Activated CD8-positive, alpha-beta T cell treated with anti-CD3 and anti-CD28 coated beads for 36 hours (primary cell): ENCODE measurements at regions of chr3 and their contacts with region 1.

Region 1: GRCh38 chr3:152193673-152194267 is 75.0 kb upstream of the MBNL1 start:
- DNase-seq: peak; percentile 60
- ATAC-seq: peak; percentile 60
- H3K4me3 Mint-ChIP-seq: peak overlapping the region; percentile 76
- H3K27ac Mint-ChIP-seq: peak overlapping the region; percentile 94
- H3K4me1 Mint-ChIP-seq: peaks cover 74% of the 10 kb centered on the region
- H3K27me3 Mint-ChIP-seq: no peaks in the 10 kb centered on the region
- CTCF ChIP-seq: no peak

Region 2: DNA sequence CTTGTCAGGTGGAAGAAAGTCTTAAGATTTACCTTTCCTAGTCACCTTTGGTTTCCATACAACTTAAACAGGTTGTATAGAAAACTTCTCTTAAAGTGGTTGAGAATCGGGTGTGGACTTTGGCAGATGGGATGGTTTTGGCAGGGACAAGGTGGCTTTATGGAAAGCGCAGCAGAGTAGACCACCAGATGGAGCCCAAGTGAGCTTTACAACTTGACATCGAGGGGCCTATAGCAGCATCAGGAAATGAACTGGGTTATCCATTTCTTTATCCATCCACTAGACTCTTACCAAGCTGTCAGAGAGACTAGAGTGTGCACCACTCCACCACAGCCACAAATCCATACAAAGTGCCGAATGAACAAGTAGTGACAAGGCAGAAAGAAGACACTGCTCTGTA is 10.3 kb before region 1 on chr3:
- CTCF ChIA-PET with region 1: interaction called, 12 read pairs
- POLR2A ChIA-PET with region 1: no interaction called
- intact Hi-C with region 1: no loop called
- DNase-seq: peak; percentile 82
- ATAC-seq: peak; percentile 91
- H3K4me3 Mint-ChIP-seq: peak overlapping the region; percentile 32
- H3K27ac Mint-ChIP-seq: peak overlapping the region; percentile 72
- H3K4me1 Mint-ChIP-seq: peaks cover 57% of the 10 kb centered on the region
- H3K27me3 Mint-ChIP-seq: no peaks in the 10 kb centered on the region
- CTCF ChIP-seq: peak; percentile 71

Region 3: DNA sequence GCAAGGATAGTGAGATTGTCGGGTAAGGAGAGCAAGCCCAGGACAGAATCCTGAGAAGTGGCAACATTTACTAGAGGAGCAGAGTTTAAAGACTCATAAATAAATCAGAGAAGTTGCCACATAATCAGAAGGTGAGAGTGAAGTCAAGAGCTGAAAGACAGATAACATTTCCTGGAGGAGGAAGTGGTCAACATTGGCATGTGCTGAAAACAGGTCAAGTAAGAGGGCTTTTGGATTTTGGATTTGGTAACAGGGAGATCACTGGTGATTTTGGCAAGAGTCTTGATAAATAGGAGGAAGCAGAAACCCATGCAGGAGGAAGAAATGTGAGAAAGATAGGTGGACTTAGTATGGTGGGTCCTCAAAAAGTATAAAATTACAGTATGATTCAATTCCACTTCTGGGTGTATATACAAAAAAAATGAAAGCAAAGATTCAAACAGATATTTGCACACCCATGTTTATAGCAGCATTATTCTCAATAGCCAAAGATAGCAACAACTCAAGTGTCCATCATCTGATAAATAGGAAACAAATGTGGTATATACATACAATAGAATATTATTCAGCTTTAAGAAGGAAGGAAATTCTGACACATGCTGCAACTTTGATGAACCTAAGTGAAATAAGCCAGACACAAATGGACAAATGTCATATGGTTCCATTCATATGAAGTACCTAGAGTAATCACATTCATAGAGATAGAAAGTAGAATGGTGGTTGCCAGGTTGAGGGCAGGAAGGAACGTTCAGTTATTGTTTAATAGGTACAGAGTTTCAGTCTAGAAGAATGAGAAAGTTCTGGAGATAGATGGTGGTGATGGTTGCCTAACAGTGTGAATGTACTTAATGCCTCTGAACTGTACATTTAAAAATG is 47.6 kb after region 1 on chr3:
- CTCF ChIA-PET with region 1: interaction called, 9 read pairs
- POLR2A ChIA-PET with region 1: interaction called, 89 read pairs
- intact Hi-C with region 1: loop called (anchors 2 kb)
- DNase-seq: peak; percentile 54
- ATAC-seq: peak; percentile 62
- H3K4me3 Mint-ChIP-seq: peak overlapping the region; percentile 47
- H3K27ac Mint-ChIP-seq: peak overlapping the region; percentile 93
- H3K4me1 Mint-ChIP-seq: peaks cover 58% of the 10 kb centered on the region
- H3K27me3 Mint-ChIP-seq: no peaks in the 10 kb centered on the region
- CTCF ChIP-seq: no peak

Region 4: DNA sequence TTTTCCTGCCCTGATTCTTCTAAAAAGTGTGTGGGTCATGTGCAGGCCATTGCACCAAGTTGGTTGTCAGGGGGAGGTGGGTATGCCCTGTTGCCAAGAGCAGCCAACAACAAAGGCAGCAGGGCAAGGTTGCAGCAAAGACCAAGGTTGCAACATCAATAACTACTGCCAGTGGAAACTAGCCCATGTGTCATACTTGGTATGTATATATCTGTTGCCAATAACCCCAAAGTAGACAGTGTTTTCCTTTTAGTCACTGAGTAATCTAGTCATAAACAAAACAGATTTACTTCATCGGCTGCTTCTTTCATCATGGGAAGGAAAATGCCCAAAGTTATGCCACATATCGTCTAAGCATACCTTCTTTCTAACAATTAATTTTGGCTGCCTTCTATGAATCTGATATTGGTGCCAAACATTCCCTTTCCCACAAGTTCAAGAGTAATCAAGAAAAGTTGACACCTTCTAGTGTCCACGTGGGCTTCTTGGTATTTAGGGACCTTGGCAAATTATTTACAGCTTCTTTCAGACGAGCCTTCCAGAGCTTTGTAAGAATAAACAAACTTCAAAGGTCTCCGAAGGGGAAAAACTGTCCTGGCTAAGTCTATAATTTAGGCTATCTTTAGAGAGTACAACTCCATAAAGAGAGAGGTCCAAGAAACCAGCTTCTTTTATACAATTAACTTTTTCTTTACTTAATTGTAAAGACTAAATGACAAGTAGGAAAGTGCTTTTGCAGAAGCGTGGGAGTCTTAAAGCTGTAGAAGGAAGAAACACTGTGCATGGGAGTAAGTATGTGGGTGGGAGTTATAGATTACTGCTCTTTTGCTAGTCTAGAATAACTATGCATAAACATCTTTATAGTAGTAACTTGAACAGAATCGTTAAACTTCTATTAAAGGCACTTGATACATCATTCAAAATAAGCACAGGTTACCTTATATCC is 65.0 kb after region 1 on chr3:
- CTCF ChIA-PET with region 1: interaction called, 3 read pairs
- POLR2A ChIA-PET with region 1: interaction called, 5 read pairs
- intact Hi-C with region 1: loop called (anchors 5 kb)
- DNase-seq: peak; percentile 82
- ATAC-seq: peak; percentile 76
- H3K4me3 Mint-ChIP-seq: peak overlapping the region; percentile 66
- H3K27ac Mint-ChIP-seq: peak overlapping the region; percentile 96
- H3K4me1 Mint-ChIP-seq: peaks cover 82% of the 10 kb centered on the region
- H3K27me3 Mint-ChIP-seq: no peaks in the 10 kb centered on the region
- CTCF ChIP-seq: no peak